ENCODE measurements at regions of chr3 and their contacts with region 1.

Region 1: GRCh38 chr3:181700168-181701087 is 11.3 kb upstream of the SOX2 start:
- DNase-seq: peak; percentile 72
- H3K27ac ChIP-seq: no peak overlapping the region
- CTCF ChIP-seq: peak; percentile 88

Region 2: DNA sequence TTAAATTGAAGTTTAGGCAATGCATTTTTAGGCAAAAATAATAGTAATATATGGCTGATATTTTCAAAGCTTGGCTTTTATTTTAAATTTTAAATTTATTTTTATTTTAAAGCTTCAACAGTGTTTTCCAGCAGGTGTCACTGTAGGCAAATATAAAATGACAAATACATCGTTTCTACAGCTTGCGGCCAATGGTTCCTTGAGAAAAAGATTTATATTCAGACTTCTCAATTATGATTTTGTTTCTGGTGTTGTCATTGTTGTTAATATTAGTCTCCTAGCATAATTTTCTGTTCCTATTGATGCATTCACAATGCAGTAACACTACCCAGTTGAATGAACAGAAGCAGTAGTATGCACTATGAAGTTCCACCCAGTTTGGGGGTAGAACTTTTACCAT is 490.2 kb before region 1 on chr3:
- CTCF ChIA-PET with region 1: interaction called, 35 read pairs
- POLR2A ChIA-PET with region 1: no interaction called
- DNase-seq: peak; percentile 7
- H3K27ac ChIP-seq: no peak overlapping the region
- CTCF ChIP-seq: peak; percentile 39; the same call in 1 of the 2 replicates

Region 3: DNA sequence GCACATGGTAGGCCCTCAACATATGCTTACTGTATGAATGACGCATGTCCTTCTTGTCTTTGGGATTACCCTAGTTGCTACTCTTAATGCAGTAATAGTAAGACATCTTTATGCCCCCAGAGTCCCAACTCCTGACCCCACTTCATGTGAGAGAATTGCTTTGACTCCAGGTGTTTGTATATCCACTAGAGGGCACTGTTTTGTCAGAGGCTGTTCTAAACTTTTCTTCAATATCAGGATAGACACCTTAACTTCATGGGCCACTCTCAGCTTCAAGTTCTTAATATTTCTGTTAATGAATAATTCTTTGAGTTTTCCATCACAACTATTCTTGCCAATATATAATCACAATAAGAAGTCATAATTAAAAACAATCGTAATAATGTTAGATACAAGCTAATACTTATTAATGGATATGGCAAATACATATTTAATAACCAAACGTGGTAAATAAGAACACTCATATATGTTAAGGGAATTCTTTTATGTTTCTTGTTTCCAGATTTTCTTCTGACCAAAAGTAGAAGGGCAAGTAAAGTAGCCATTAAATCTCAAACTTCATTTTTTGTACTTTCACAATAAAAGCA is 373.7 kb before region 1 on chr3:
- CTCF ChIA-PET with region 1: interaction called, 22 read pairs
- POLR2A ChIA-PET with region 1: no interaction called
- DNase-seq: peak; percentile 52
- H3K27ac ChIP-seq: no peak overlapping the region
- CTCF ChIP-seq: peak; percentile 75